Activated CD8-positive, alpha-beta T cell treated with anti-CD3 and anti-CD28 coated beads for 36 hours (primary cell): ENCODE measurements at regions of chr7 and their contacts with region 1.

Region 1: GRCh38 chr7:104629403-104629802 is 301.0 kb downstream of the LHFPL3 start:
- DNase-seq: no peak
- ATAC-seq: no peak
- H3K4me3 Mint-ChIP-seq: no peak overlapping the region
- H3K27ac Mint-ChIP-seq: no peak overlapping the region
- H3K4me1 Mint-ChIP-seq: no peaks in the 10 kb centered on the region
- H3K27me3 Mint-ChIP-seq: peaks cover 1% of the 10 kb centered on the region
- CTCF ChIP-seq: no peak

Region 2: DNA sequence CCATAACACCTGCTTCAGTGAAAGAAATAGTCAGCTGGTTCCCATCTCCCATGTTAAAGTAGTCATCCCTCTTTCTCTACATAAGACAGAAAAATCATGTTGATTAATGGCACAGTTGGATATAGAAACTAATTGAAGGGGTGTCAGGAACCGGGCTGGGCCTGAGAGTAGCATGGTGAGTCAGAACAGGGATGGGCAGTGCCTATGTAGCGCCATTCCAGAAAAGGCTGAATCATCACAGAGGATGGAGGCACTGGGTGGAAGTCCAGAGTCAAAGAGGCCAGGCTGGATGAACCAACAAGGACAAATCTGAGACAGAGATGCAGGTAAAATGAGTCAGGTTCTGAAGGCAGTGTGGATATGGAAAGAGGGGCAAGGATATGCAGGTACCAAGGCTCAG is 99.8 kb before region 1 on chr7:
- CTCF ChIA-PET with region 1: no interaction called
- POLR2A ChIA-PET with region 1: no interaction called
- intact Hi-C with region 1: no loop called
- DNase-seq: no peak
- ATAC-seq: no peak
- H3K4me3 Mint-ChIP-seq: no peak overlapping the region
- H3K27ac Mint-ChIP-seq: no peak overlapping the region
- H3K4me1 Mint-ChIP-seq: no peaks in the 10 kb centered on the region
- H3K27me3 Mint-ChIP-seq: no peaks in the 10 kb centered on the region
- CTCF ChIP-seq: no peak

Region 3: GRCh38 chr7:104606854-104607253 is 22.5 kb before region 1 on chr7:
- CTCF ChIA-PET with region 1: no interaction called
- POLR2A ChIA-PET with region 1: no interaction called
- intact Hi-C with region 1: no loop called
- DNase-seq: no peak
- ATAC-seq: no peak
- H3K4me3 Mint-ChIP-seq: no peak overlapping the region
- H3K27ac Mint-ChIP-seq: no peak overlapping the region
- H3K4me1 Mint-ChIP-seq: no peaks in the 10 kb centered on the region
- H3K27me3 Mint-ChIP-seq: no peaks in the 10 kb centered on the region
- CTCF ChIP-seq: no peak

Region 4: GRCh38 chr7:104643587-104644217 is 14.3 kb after region 1 on chr7:
- CTCF ChIA-PET with region 1: interaction called, 13 read pairs
- POLR2A ChIA-PET with region 1: no interaction called
- intact Hi-C with region 1: no loop called
- DNase-seq: peak; percentile 17
- ATAC-seq: no peak
- H3K4me3 Mint-ChIP-seq: no peak overlapping the region
- H3K27ac Mint-ChIP-seq: no peak overlapping the region
- H3K4me1 Mint-ChIP-seq: no peaks in the 10 kb centered on the region
- H3K27me3 Mint-ChIP-seq: peaks cover 11% of the 10 kb centered on the region
- CTCF ChIP-seq: peak; percentile 42